ENCODE measurements at regions of chr1 and their contacts with region 1.

Region 1: GRCh38 chr1:235199441-235199840 is 38.4 kb upstream of the RBM34 start:
- DNase-seq: no peak
- ATAC-seq: peak; percentile 75

Region 2: GRCh38 chr1:235244974-235245592 is 45.6 kb after region 1 on chr1:
- intact Hi-C with region 1: loop called (anchors 2 kb)
- DNase-seq: no peak
- ATAC-seq: no peak